OCI-LY7 (cell line): ENCODE measurements at regions of chr4 and their contacts with region 1.

Region 1: DNA sequence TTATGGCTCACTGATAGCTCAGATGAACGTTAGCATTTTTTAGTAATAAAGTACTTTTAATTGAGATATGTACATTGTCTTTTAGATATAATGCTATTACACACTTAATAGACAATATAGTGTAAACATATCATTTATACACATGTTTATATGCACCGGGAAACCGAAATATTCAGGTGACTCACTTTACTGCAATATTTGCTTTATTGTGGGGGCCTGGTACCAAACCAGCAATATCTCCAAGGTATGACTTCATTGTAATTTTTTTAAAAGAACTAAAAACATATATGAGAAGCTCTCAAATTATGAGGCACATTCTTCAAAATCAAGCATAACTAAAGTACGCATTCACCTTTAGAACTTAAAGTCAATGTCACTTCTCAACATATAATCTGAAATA is 231.2 kb upstream of the SLC7A11 start:
- DNase-seq: no peak
- H3K4me3 ChIP-seq: no peak overlapping the region
- H3K27ac ChIP-seq: no peak overlapping the region
- H3K4me1 ChIP-seq: no peaks in the 10 kb centered on the region
- CTCF ChIP-seq: no peak

Region 2: DNA sequence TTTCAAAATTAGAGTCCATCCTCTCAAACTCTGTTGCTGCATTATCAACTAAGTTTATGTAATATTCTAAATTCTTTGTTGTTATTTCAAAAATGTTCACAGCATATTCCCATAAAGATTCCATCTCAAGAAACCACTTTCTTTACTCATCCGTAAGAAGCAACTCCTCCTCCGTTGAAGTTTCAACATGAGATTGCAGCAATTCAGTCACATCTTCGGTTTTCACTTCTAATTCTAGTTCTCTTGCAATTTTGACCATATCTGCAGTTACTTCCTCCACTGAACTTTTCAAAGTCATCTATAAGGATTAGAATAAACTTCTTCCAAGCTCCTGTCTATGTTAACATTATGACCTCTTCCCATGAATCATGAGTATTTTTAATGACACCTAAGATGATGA is 14.6 kb before region 1 on chr4:
- CTCF ChIA-PET with region 1: no interaction called
- POLR2A ChIA-PET with region 1: interaction called, 10 read pairs
- intact Hi-C with region 1: no loop called
- DNase-seq: no peak
- H3K4me3 ChIP-seq: no peak overlapping the region
- H3K27ac ChIP-seq: no peak overlapping the region
- H3K4me1 ChIP-seq: no peaks in the 10 kb centered on the region
- CTCF ChIP-seq: no peak